Calu3 (cell line): ENCODE measurements at regions of chr3 and their contacts with region 1.

Region 1: GRCh38 chr3:30611613-30612436 is 5.4 kb downstream of the TGFBR2 start:
- DNase-seq: no peak
- H3K4me3 Mint-ChIP-seq: peak overlapping the region; percentile 66
- H3K27ac Mint-ChIP-seq: peak overlapping the region; percentile 67
- H3K4me1 Mint-ChIP-seq: peaks cover 68% of the 10 kb centered on the region
- H3K27me3 Mint-ChIP-seq: no peaks in the 10 kb centered on the region
- CTCF ChIP-seq: no peak

Region 2: GRCh38 chr3:30658328-30659052 is 46.7 kb after region 1 on chr3:
- CTCF ChIA-PET with region 1: no interaction called
- intact Hi-C with region 1: loop called (anchors 5 kb)
- DNase-seq: no peak
- H3K4me3 Mint-ChIP-seq: peak overlapping the region; percentile 31
- H3K27ac Mint-ChIP-seq: peak overlapping the region; percentile 66
- H3K4me1 Mint-ChIP-seq: peaks cover 57% of the 10 kb centered on the region
- H3K27me3 Mint-ChIP-seq: no peaks in the 10 kb centered on the region
- CTCF ChIP-seq: no peak

Region 3: GRCh38 chr3:30672959-30673358 is 61.1 kb after region 1 on chr3:
- CTCF ChIA-PET with region 1: no interaction called
- intact Hi-C with region 1: no loop called
- DNase-seq: no peak
- H3K4me3 Mint-ChIP-seq: no peak overlapping the region
- H3K27ac Mint-ChIP-seq: peak overlapping the region; percentile 27
- H3K4me1 Mint-ChIP-seq: peaks cover 8% of the 10 kb centered on the region
- H3K27me3 Mint-ChIP-seq: no peaks in the 10 kb centered on the region
- CTCF ChIP-seq: no peak